BJ (cell line): ENCODE measurements at regions of chr15 and their contacts with region 1.

Region 1: DNA sequence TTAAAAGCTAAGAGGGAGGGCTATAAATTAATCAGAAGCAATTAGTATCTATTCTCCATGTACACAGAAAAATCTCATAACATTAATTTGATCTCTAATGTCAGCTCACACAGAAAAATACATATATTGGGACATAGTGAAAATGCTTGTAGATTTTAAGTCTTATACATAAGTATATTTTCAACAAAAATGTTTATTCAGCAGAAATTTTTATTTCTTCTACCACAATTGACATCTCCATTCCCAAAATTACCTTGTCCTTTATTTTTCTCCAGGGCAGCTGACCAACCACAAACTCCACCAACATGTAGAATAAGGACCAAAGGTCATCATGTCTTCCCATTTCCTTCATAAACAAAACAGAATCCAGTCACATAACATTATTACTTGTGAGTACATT is 74.5 kb upstream of the CDAN1 start:
- DNase-seq: no peak
- H3K4me3 ChIP-seq: no peak overlapping the region
- H3K27me3 ChIP-seq: no peaks in the 10 kb centered on the region
- CTCF ChIP-seq: no peak

Region 2: DNA sequence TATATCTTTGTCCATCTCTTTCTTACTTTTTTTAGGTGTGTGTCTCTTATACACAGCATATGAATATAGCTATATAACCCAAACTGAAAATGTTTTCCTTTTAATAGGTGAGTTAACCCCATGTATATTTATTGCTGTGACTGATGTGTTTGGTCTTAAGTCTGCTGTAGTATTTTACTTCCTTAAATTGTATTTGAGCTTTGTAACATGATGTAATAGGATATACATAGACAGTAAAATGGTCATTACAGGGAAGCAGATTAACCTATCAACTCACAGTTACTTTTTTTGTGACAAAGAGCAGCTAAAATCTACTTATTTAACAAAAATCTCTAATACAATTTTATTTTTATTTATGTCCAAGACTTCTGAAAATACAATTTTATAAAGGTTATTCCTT is 22.7 kb before region 1 on chr15:
- CTCF ChIA-PET with region 1: no interaction called
- POLR2A ChIA-PET with region 1: no interaction called
- DNase-seq: no peak
- H3K4me3 ChIP-seq: no peak overlapping the region
- H3K27me3 ChIP-seq: no peaks in the 10 kb centered on the region
- CTCF ChIP-seq: no peak

Region 3: DNA sequence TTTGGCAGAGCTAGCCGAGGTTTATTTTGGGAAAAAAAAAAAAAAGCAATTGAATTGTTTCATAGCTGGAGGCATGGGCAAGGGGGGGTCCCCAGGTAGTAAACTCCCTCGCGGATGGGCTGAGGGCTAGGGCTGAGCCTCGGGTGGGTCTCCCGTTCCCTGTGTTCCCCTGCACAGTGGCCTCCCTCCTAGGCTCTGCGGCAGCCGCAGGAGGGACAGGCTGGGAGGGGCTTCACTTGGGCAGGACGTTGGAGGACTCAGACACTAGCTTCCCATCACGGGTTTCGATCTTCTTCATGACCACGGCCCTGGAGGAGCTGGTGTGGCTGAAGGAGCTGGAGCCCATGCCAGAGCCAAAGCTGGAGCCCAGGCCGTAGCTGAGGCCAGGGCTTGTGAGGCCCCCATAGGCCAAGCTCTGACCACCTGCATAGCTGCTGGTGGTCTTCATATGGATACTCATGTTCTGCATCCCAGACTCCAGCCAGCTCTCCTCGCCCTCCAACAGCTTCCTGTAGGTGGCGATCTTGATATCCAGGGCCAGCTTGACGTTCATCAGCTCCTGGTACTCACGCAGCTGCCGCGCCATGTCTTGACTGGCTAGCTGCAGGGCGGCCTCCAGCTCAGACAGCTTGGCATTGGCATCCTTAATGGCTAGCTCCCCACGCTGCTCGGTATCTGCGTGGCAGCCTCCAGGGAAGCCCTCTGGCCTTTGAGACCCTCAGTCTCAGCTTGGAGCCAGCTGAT is 10.5 kb before region 1 on chr15:
- CTCF ChIA-PET with region 1: interaction called, 12 read pairs
- POLR2A ChIA-PET with region 1: no interaction called
- DNase-seq: no peak
- H3K4me3 ChIP-seq: no peak overlapping the region
- H3K27me3 ChIP-seq: no peaks in the 10 kb centered on the region
- CTCF ChIP-seq: no peak